ENCODE measurements at regions of chr17 and their contacts with region 1.

Region 1: GRCh38 chr17:51860954-51861561 is 297.5 kb downstream of the CA10 start:
- DNase-seq: peak; percentile 43 to 81
- H3K4me3 ChIP-seq: no peak overlapping the region
- H3K27ac ChIP-seq: no peak overlapping the region
- H3K4me1 ChIP-seq: no peaks in the 10 kb centered on the region
- H3K27me3 ChIP-seq: no peaks in the 10 kb centered on the region
- CTCF ChIP-seq: peak; percentile 77 to 94 (median 88)
- EP300 ChIP-seq: no peak
- POLR2A ChIP-seq: no peak
- RAD21 ChIP-seq: peak; percentile 86 to 87

Region 2: GRCh38 chr17:51585514-51586104 is 275.4 kb before region 1 on chr17:
- CTCF ChIA-PET with region 1: no interaction called
- POLR2A ChIA-PET with region 1: no interaction called
- DNase-seq: peak; percentile 9 to 62
- H3K4me3 ChIP-seq: no peak overlapping the region
- H3K27ac ChIP-seq: no peak overlapping the region
- H3K4me1 ChIP-seq: no peaks in the 10 kb centered on the region
- H3K27me3 ChIP-seq: no peaks in the 10 kb centered on the region
- CTCF ChIP-seq: peak; percentile 76 to 91 (median 89)
- EP300 ChIP-seq: no peak
- POLR2A ChIP-seq: no peak
- RAD21 ChIP-seq: peak; percentile 89 to 94

Region 3: GRCh38 chr17:51802544-51802943 is 58.5 kb before region 1 on chr17:
- CTCF ChIA-PET with region 1: no interaction called
- POLR2A ChIA-PET with region 1: no interaction called
- DNase-seq: no peak
- H3K4me3 ChIP-seq: no peak overlapping the region
- H3K27ac ChIP-seq: no peak overlapping the region
- H3K4me1 ChIP-seq: no peaks in the 10 kb centered on the region
- H3K27me3 ChIP-seq: no peaks in the 10 kb centered on the region
- CTCF ChIP-seq: no peak
- EP300 ChIP-seq: no peak
- POLR2A ChIP-seq: no peak
- RAD21 ChIP-seq: no peak

Region 4: GRCh38 chr17:51850201-51850600 is 10.9 kb before region 1 on chr17:
- CTCF ChIA-PET with region 1: interaction called, 20 read pairs
- POLR2A ChIA-PET with region 1: no interaction called
- DNase-seq: no peak
- H3K4me3 ChIP-seq: no peak overlapping the region
- H3K27ac ChIP-seq: no peak overlapping the region
- H3K4me1 ChIP-seq: no peaks in the 10 kb centered on the region
- H3K27me3 ChIP-seq: no peaks in the 10 kb centered on the region
- CTCF ChIP-seq: peak; percentile 43 to 61 (median 52)
- EP300 ChIP-seq: no peak
- POLR2A ChIP-seq: no peak
- RAD21 ChIP-seq: peak; percentile 49 to 60

Region 5: GRCh38 chr17:51901242-51901641 is 40.2 kb after region 1 on chr17:
- CTCF ChIA-PET with region 1: interaction called, 12 read pairs
- POLR2A ChIA-PET with region 1: no interaction called
- DNase-seq: peak in 1 of 2 experiments; percentile 46
- H3K4me3 ChIP-seq: no peak overlapping the region
- H3K27ac ChIP-seq: no peak overlapping the region
- H3K4me1 ChIP-seq: no peaks in the 10 kb centered on the region
- H3K27me3 ChIP-seq: no peaks in the 10 kb centered on the region
- CTCF ChIP-seq: peak; percentile 39 to 59 (median 49)
- EP300 ChIP-seq: no peak
- POLR2A ChIP-seq: no peak
- RAD21 ChIP-seq: peak; percentile 56 to 61

Measured in H1 (cell line).